Motor neuron (in vitro differentiated cells): ENCODE measurements at regions of chr2 and their contacts with region 1.

Region 1: GRCh38 chr2:147006736-147007141 is 838.1 kb upstream of the ACVR2A start:
- ATAC-seq: peak in 1 of 8 experiments; percentile 49
- H3K4me3 ChIP-seq: no peak overlapping the region
- H3K27ac ChIP-seq: no peak overlapping the region
- H3K4me1 ChIP-seq: no peaks in the 10 kb centered on the region

Region 2: GRCh38 chr2:146544701-146545100 is 462.0 kb before region 1 on chr2:
- in situ Hi-C with region 1: no loop called
- ATAC-seq: no peak
- H3K4me3 ChIP-seq: no peak overlapping the region
- H3K27ac ChIP-seq: no peak overlapping the region
- H3K4me1 ChIP-seq: peaks cover 7 to 16% of the 10 kb centered on the region in 2 donors

Region 3: GRCh38 chr2:146734042-146734820 is 272.5 kb before region 1 on chr2:
- in situ Hi-C with region 1: loop called in 1 of 9 experiments (anchors 25 kb)
- ATAC-seq: peak; percentile 69 to 88 (median 82)
- H3K4me3 ChIP-seq: no peak overlapping the region
- H3K27ac ChIP-seq: no peak overlapping the region
- H3K4me1 ChIP-seq: no peaks in the 10 kb centered on the region

Region 4: GRCh38 chr2:147980940-147981528 is 974.3 kb after region 1 on chr2:
- in situ Hi-C with region 1: no loop called
- ATAC-seq: peak in 7 of 8 experiments; percentile 43 to 97 (median 78)
- H3K4me3 ChIP-seq: no peak overlapping the region
- H3K27ac ChIP-seq: no peak overlapping the region
- H3K4me1 ChIP-seq: no peaks in the 10 kb centered on the region